Esophagus muscularis mucosa (tissue), 4 donors: ENCODE measurements at regions of chr5 and their contacts with region 1.

Region 1: GRCh38 chr5:103475629-103476240 is 86.9 kb downstream of the NUDT12 start:
- DNase-seq: no peak
- H3K4me3 ChIP-seq: no peak overlapping the region
- H3K27ac ChIP-seq: no peak overlapping the region
- H3K4me1 ChIP-seq: peaks cover 0 to 3% (median 0%) of the 10 kb centered on the region in 4 donors
- H3K27me3 ChIP-seq: no peaks in the 10 kb centered on the region
- CTCF ChIP-seq: peak; percentile 62 to 73 (median 66)
- EP300 ChIP-seq: no peak
- POLR2A ChIP-seq: no peak

Region 2: GRCh38 chr5:103232393-103232999 is 243.2 kb before region 1 on chr5:
- intact Hi-C with region 1: loop called (anchors 2 kb)
- DNase-seq: no peak
- H3K4me3 ChIP-seq: no peak overlapping the region
- H3K27ac ChIP-seq: no peak overlapping the region
- H3K4me1 ChIP-seq: peaks cover 0 to 2% (median 0%) of the 10 kb centered on the region in 4 donors
- H3K27me3 ChIP-seq: no peaks in the 10 kb centered on the region
- CTCF ChIP-seq: peak; percentile 83 to 95 (median 92)
- EP300 ChIP-seq: no peak
- POLR2A ChIP-seq: no peak